ENCODE measurements at regions of chr7 and their contacts with region 1.

Region 1: GRCh38 chr7:36677769-36678437 is 46.4 kb downstream of the AOAH start:
- DNase-seq: no peak
- H3K4me3 ChIP-seq: no peak overlapping the region
- H3K27ac ChIP-seq: no peak overlapping the region
- H3K27me3 ChIP-seq: no peaks in the 10 kb centered on the region
- CTCF ChIP-seq: no peak

Region 2: GRCh38 chr7:36605261-36606051 is 72.4 kb before region 1 on chr7:
- intact Hi-C with region 1: loop called in 1 of 2 experiments (anchors 5 kb)
- DNase-seq: no peak
- H3K4me3 ChIP-seq: no peak overlapping the region
- H3K27ac ChIP-seq: peak overlapping the region in 21 of 59 donors; percentile 0 to 87 (median 31)
- H3K27me3 ChIP-seq: no peaks in the 10 kb centered on the region
- CTCF ChIP-seq: no peak

Region 3: DNA sequence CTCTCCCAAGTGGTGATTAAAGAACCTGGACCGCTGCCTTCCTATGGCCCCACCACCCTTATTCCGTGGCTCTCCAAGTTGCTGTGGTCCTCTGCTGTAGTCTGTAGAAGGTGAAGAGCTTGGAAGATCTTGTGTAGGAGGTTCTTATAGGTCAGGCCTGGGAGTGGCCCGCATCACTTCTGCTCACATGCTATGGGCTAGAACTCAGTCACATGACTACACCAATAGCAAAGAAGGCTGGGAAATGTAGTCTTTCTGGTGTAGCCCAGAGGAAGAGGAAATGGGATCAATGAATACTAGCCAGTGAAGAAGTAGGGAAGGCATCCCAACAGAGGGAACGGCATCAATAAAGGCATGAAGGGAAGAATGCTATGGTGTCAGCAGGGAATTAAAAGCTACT is 87.7 kb after region 1 on chr7:
- intact Hi-C with region 1: no loop called
- DNase-seq: no peak
- H3K4me3 ChIP-seq: no peak overlapping the region
- H3K27ac ChIP-seq: no peak overlapping the region
- H3K27me3 ChIP-seq: no peaks in the 10 kb centered on the region
- CTCF ChIP-seq: no peak

Region 4: DNA sequence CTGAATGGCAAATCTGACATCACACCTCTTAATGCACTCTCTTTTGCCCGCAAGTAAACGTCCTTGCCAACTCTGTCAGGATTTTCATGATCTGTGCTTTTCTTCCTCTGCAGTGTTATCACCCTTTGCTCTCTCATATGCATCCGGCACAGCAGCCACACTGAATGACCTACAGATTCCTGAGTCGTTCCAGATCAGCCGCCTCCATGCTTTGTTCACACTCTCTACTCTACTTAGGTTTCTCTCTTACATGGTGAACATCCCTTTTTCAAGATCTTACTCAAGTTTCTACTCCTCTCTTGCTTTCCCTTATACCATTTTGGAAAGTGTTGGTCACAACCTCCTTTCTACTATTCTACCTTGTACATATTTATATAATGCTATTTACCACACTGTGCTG is 174.1 kb after region 1 on chr7:
- intact Hi-C with region 1: no loop called
- DNase-seq: no peak
- H3K4me3 ChIP-seq: no peak overlapping the region
- H3K27ac ChIP-seq: peak overlapping the region in 1 of 59 donors; percentile 3
- H3K27me3 ChIP-seq: no peaks in the 10 kb centered on the region
- CTCF ChIP-seq: no peak